Left lung (tissue), 14 donors: ENCODE measurements at regions of chr21 and their contacts with region 1.

Region 1: GRCh38 chr21:42594616-42595282 is 58.7 kb upstream of the PDE9A start:
- DNase-seq: no peak
- ATAC-seq: no peak
- H3K4me3 ChIP-seq: no peak overlapping the region
- H3K27ac ChIP-seq: no peak overlapping the region
- H3K4me1 ChIP-seq: peaks cover 0 to 9% of the 10 kb centered on the region in 2 donors
- H3K27me3 ChIP-seq: peaks cover 0 to 12% of the 10 kb centered on the region in 2 donors
- CTCF ChIP-seq: no peak

Region 2: DNA sequence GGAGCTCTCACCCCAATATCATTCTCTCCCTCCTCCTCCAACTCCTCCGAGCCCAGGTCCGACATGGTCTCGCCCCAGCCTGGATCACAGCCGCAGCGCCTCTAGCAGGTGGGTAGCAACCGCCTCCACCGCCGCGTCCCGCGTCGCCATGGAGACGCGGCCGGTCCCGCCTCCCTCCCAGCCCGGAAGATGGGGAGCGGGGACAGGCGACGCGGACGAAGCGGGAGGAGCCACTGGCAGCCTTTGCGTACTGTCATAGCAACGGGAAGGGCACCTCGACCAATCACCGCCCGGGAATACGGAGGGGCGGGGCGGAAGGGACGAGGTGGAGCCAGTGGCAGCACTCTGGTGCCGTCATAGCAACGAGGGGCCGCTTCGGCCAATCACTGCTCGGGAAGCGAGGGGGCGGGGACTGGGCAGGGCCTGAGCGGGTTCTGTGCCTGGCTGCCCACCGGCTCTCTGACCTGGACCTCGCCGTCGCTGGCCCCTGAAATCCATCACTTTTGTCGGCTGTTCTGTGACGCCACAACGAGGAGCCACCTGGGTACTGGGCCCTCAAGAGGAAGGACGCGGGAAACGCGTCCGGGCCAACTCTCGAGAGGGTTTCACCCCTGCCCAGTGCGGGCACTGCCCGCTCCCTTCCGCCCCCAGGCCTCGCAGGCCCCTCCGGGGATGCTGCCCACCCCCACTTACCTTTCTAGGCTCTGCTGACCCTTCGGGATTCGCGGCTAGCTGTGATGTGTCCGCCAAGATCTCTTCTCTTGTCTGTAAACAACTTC is 98.4 kb before region 1 on chr21 and contains the start of gene RSPH1:
- intact Hi-C with region 1: no loop called
- DNase-seq: peak; percentile 97 to 100 (median 100)
- ATAC-seq: peak; percentile 97
- H3K4me3 ChIP-seq: peak within 1 kb of the TSS; percentile 54 to 75
- H3K27ac ChIP-seq: peak within 1 kb of the TSS; percentile 72 to 82
- H3K4me1 ChIP-seq: peaks cover 0 to 15% of the 10 kb centered on the region in 2 donors
- H3K27me3 ChIP-seq: no peaks in the 10 kb centered on the region
- CTCF ChIP-seq: no peak
- polyA plus RNA-seq, gene RSPH1: 4.2 to 27.3 (median 16.7) TPM

Region 3: DNA sequence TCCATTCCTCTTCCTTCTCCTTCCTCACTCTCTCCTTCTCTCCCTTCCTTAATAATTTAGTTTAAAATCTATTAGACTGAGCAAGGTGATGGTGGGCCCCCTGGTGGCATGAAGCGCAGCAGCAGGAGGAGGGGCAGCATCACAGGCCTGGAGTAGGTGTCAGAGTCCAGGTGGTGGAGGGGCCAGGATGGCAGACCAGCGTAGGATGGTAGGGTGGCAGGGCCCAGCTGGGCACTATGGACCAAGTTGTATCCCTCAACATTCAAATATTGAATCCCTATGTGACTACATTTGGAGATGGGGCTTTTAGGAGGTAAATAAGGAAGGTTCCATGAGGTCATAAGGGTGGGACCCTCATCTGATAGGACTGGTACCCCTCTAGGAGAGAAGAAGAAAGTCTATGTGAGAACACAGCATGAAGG is 223.6 kb after region 1 on chr21:
- intact Hi-C with region 1: loop called in 1 of 2 experiments (anchors 5 kb)
- DNase-seq: peak in 3 of 4 donors; percentile 56 to 85 (median 65)
- ATAC-seq: peak; percentile 98
- H3K4me3 ChIP-seq: no peak overlapping the region
- H3K27ac ChIP-seq: no peak overlapping the region
- H3K4me1 ChIP-seq: no peaks in the 10 kb centered on the region
- H3K27me3 ChIP-seq: no peaks in the 10 kb centered on the region
- CTCF ChIP-seq: peak; percentile 82 to 92